Colonic mucosa (tissue), 4 donors: ENCODE measurements at regions of chr16 and their contacts with region 1.

Region 1: DNA sequence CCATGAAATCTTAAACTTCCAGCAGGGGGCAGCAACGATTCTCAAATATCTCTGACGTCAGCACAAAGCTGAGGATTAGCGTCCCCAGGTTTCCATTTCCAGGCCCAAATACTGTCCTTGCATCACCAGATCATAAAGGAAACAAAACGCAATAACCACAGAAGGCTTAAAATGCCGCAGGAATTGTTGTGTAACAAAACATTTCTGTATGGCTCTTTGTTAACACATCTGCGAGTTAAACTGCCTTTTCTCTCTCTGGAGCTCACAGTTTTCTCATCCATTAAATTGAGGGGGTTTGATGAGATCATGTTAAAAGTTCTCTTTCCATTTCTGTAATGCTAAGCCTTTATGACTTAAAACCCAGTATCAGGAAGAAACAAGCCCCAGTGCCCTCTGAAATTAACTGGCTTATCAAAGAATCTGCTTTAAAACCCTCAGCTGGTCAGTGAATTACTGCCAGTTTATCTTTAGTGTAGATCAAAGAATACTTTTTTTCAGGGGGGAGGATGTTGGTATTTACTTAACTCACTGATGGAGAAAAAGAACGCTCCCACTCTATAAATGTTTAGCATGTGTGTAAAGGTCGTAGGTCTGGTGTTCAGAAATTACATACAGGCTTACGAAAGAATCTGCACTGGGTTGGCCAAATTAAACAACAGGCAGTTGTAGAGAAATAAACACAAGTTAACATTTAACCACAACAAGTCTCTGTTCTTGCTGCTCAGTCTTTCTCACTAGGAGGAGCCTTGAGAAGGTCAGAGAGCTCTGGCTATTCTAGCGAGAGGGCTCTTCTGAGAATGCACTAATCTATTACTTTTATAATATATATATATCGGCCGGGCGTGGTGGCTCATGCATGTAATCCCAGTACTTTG is 10.6 kb upstream of the TERF2 start:
- DNase-seq: peak; percentile 91
- H3K4me3 ChIP-seq: no peak overlapping the region
- H3K27ac ChIP-seq: peak overlapping the region; percentile 90
- H3K4me1 ChIP-seq: peaks cover 10% of the 10 kb centered on the region
- H3K27me3 ChIP-seq: no peaks in the 10 kb centered on the region
- CTCF ChIP-seq: peak; percentile 79

Region 2: GRCh38 chr16:69443927-69444631 is 47.7 kb after region 1 on chr16:
- intact Hi-C with region 1: no loop called
- DNase-seq: peak; percentile 43
- H3K4me3 ChIP-seq: peak overlapping the region; percentile 6
- H3K27ac ChIP-seq: peak overlapping the region; percentile 76
- H3K4me1 ChIP-seq: no peaks in the 10 kb centered on the region
- H3K27me3 ChIP-seq: no peaks in the 10 kb centered on the region
- CTCF ChIP-seq: no peak

Region 3: GRCh38 chr16:69565671-69566239 is 169.3 kb after region 1 on chr16 and contains the start of gene NFAT5:
- intact Hi-C with region 1: loop called (anchors 10 kb)
- DNase-seq: peak; percentile 89
- H3K4me3 ChIP-seq: peak within 1 kb of the TSS; percentile 60
- H3K27ac ChIP-seq: peak within 1 kb of the TSS; percentile 94
- H3K4me1 ChIP-seq: peaks cover 9% of the 10 kb centered on the region
- H3K27me3 ChIP-seq: no peaks in the 10 kb centered on the region
- CTCF ChIP-seq: no peak
- total RNA-seq, gene NFAT5: 18.4 to 30.2 TPM

Region 4: GRCh38 chr16:69709456-69710084 is 313.1 kb after region 1 on chr16:
- intact Hi-C with region 1: loop called (anchors 5 kb)
- DNase-seq: no peak
- H3K4me3 ChIP-seq: no peak overlapping the region
- H3K27ac ChIP-seq: no peak overlapping the region
- H3K4me1 ChIP-seq: no peaks in the 10 kb centered on the region
- H3K27me3 ChIP-seq: no peaks in the 10 kb centered on the region
- CTCF ChIP-seq: peak; percentile 56

Region 5: GRCh38 chr16:69747115-69747514 is 350.7 kb after region 1 on chr16:
- intact Hi-C with region 1: loop called (anchors 5 kb)
- DNase-seq: no peak
- H3K4me3 ChIP-seq: no peak overlapping the region
- H3K27ac ChIP-seq: no peak overlapping the region
- H3K4me1 ChIP-seq: no peaks in the 10 kb centered on the region
- H3K27me3 ChIP-seq: no peaks in the 10 kb centered on the region
- CTCF ChIP-seq: no peak